ENCODE measurements at regions of chr6 and their contacts with region 1.

Region 1: GRCh38 chr6:128754658-128755256 is 128.2 kb upstream of the LAMA2 start:
- DNase-seq: no peak
- ATAC-seq: no peak
- H3K4me3 ChIP-seq: no peak overlapping the region
- H3K27ac ChIP-seq: no peak overlapping the region
- H3K4me1 ChIP-seq: no peaks in the 10 kb centered on the region
- H3K27me3 ChIP-seq: no peaks in the 10 kb centered on the region
- CTCF ChIP-seq: no peak
- EP300 ChIP-seq: no peak
- POLR2A ChIP-seq: no peak
- RAD21 ChIP-seq: no peak

Region 2: DNA sequence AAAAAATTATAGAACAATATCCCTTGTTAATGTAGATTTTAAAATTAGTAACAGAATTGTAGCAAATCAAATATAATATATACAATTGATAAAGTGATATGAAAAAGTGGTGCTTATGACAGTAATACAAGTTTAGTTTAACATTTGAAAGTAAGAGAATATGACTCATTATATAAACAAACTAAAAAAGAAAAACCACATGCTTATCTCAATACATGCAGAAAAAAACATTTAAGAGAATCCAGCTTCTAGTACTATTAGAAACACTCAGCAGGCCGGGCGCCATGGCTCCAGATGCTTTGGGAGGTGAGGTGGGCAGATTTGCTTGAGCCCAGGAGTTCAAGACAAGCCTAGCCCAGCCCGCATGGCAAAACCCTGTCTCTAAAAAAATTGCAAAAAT is 67.5 kb after region 1 on chr6:
- CTCF ChIA-PET with region 1: no interaction called
- POLR2A ChIA-PET with region 1: no interaction called
- in situ Hi-C with region 1: no loop called
- intact Hi-C with region 1: loop called (anchors 2 kb)
- DNase-seq: no peak
- ATAC-seq: no peak
- H3K4me3 ChIP-seq: no peak overlapping the region
- H3K27ac ChIP-seq: no peak overlapping the region
- H3K4me1 ChIP-seq: no peaks in the 10 kb centered on the region
- H3K27me3 ChIP-seq: no peaks in the 10 kb centered on the region
- CTCF ChIP-seq: no peak
- EP300 ChIP-seq: no peak
- POLR2A ChIP-seq: no peak
- RAD21 ChIP-seq: no peak

Measured in HepG2 (cell line).